Breast epithelium (tissue), 4 donors: ENCODE measurements at regions of chr7 and their contacts with region 1.

Region 1: GRCh38 chr7:31948029-31948428 is 122.2 kb downstream of the PDE1C start:
- DNase-seq: no peak
- H3K4me3 ChIP-seq: no peak overlapping the region
- H3K27ac ChIP-seq: no peak overlapping the region
- H3K4me1 ChIP-seq: no peaks in the 10 kb centered on the region
- H3K27me3 ChIP-seq: no peaks in the 10 kb centered on the region
- CTCF ChIP-seq: no peak
- POLR2A ChIP-seq: no peak

Region 2: GRCh38 chr7:31997423-31997822 is 49.4 kb after region 1 on chr7:
- intact Hi-C with region 1: no loop called
- DNase-seq: no peak
- H3K4me3 ChIP-seq: no peak overlapping the region
- H3K27ac ChIP-seq: no peak overlapping the region
- H3K4me1 ChIP-seq: no peaks in the 10 kb centered on the region
- H3K27me3 ChIP-seq: no peaks in the 10 kb centered on the region
- CTCF ChIP-seq: no peak
- POLR2A ChIP-seq: no peak

Region 3: DNA sequence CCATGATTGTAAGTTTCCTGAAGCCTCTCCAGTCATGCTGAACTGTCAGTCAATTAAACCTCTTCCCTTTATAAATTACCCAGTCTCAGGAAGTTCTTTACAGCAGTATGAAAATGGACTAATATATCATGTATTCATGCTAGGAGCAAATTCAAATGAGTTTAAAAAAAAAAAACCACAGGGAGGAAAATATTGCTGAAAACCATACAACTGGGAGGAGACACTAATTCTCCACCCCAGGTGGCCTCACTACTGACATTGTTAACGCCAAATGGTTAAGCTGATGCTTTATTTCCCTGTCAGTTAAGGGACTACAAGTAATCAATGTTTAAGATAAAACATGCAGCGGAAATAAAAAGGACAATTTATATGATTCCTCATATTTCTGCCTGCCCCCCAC is 67.1 kb after region 1 on chr7:
- intact Hi-C with region 1: loop called (anchors 2 kb)
- DNase-seq: no peak
- H3K4me3 ChIP-seq: no peak overlapping the region
- H3K27ac ChIP-seq: no peak overlapping the region
- H3K4me1 ChIP-seq: no peaks in the 10 kb centered on the region
- H3K27me3 ChIP-seq: no peaks in the 10 kb centered on the region
- CTCF ChIP-seq: no peak
- POLR2A ChIP-seq: no peak

Region 4: DNA sequence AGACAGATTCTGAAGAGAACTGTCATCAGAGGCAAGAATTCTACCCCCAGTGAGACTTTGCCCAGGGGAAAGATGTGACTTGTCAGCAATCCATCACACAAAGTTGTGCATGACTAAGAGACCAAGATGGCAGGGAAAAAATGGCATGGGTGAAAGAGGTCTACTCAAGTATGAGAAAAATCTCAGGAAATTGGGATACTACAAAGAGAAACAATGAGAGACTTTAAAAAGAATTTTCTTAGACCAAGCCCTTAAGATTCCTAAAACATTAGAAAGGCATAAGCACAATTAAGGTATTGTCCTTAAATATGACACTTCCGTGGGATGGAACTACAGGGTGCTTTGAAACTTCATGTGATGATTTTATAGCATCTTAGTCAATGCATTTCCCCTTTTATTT is 167.8 kb after region 1 on chr7:
- intact Hi-C with region 1: no loop called
- DNase-seq: no peak
- H3K4me3 ChIP-seq: no peak overlapping the region
- H3K27ac ChIP-seq: no peak overlapping the region
- H3K4me1 ChIP-seq: no peaks in the 10 kb centered on the region
- H3K27me3 ChIP-seq: no peaks in the 10 kb centered on the region
- CTCF ChIP-seq: no peak
- POLR2A ChIP-seq: no peak

Region 5: GRCh38 chr7:33946094-33946700 is 1998.2 kb after region 1 on chr7:
- intact Hi-C with region 1: no loop called
- DNase-seq: no peak
- H3K4me3 ChIP-seq: no peak overlapping the region
- H3K27ac ChIP-seq: no peak overlapping the region
- H3K4me1 ChIP-seq: no peaks in the 10 kb centered on the region
- H3K27me3 ChIP-seq: no peaks in the 10 kb centered on the region
- CTCF ChIP-seq: no peak
- POLR2A ChIP-seq: no peak